HEK293 (cell line): ENCODE measurements at regions of chr16 and their contacts with region 1.

Region 1: GRCh38 chr16:11372073-11372828 is 27.0 kb downstream of the RMI2 start:
- H3K4me3 ChIP-seq: no peak overlapping the region
- H3K27ac ChIP-seq: no peak overlapping the region
- H3K4me1 ChIP-seq: peaks cover 2% of the 10 kb centered on the region; the same call in 1 of the 2 replicates
- CTCF ChIP-seq: no peak

Region 2: GRCh38 chr16:11208916-11209665 is 163.2 kb before region 1 on chr16:
- CTCF ChIA-PET with region 1: no interaction called
- POLR2A ChIA-PET with region 1: no interaction called
- H3K4me3 ChIP-seq: no peak overlapping the region
- H3K27ac ChIP-seq: no peak overlapping the region
- H3K4me1 ChIP-seq: no peaks in the 10 kb centered on the region
- CTCF ChIP-seq: no peak

Region 3: DNA sequence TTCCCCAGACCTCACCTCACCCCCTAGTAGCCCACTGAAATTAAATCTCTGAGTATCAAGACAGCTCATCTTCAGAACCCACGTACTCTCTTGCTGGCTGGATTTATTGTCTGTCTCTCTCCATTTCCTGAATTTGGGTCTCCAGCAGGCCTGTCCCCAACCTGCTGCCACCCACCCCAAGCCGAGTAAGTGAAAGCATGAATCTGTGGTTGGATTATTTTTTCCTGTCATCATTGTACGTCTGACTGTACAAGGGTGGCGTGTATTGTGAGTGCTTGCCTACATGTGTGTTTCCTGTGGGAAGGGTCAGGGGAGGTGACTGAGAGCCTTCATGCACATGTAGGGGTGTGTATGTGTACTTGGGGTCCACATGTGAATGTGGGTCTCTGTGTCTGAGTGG is 108.5 kb before region 1 on chr16:
- CTCF ChIA-PET with region 1: no interaction called
- POLR2A ChIA-PET with region 1: no interaction called
- H3K4me3 ChIP-seq: no peak overlapping the region
- H3K27ac ChIP-seq: no peak overlapping the region
- H3K4me1 ChIP-seq: no peaks in the 10 kb centered on the region
- CTCF ChIP-seq: no peak

Region 4: GRCh38 chr16:11328172-11329070 is 43.8 kb before region 1 on chr16:
- CTCF ChIA-PET with region 1: no interaction called
- POLR2A ChIA-PET with region 1: no interaction called
- H3K4me3 ChIP-seq: no peak overlapping the region
- H3K27ac ChIP-seq: no peak overlapping the region
- H3K4me1 ChIP-seq: no peaks in the 10 kb centered on the region
- CTCF ChIP-seq: no peak

Region 5: GRCh38 chr16:11356573-11357331 is 15.5 kb before region 1 on chr16:
- CTCF ChIA-PET with region 1: interaction called, 20 read pairs
- POLR2A ChIA-PET with region 1: no interaction called
- H3K4me3 ChIP-seq: no peak overlapping the region
- H3K27ac ChIP-seq: no peak overlapping the region
- H3K4me1 ChIP-seq: 0 out of 2 replicates have a peak, but pooled peaks cover 3% of the 10 kb centered on the region
- CTCF ChIP-seq: 0 out of 2 replicates have a peak, but pooled peaks have one; percentile 10

Region 6: GRCh38 chr16:11386791-11387546 is 14.7 kb after region 1 on chr16:
- CTCF ChIA-PET with region 1: interaction called, 20 read pairs
- POLR2A ChIA-PET with region 1: no interaction called
- H3K4me3 ChIP-seq: no peak overlapping the region
- H3K27ac ChIP-seq: no peak overlapping the region
- H3K4me1 ChIP-seq: no peaks in the 10 kb centered on the region
- CTCF ChIP-seq: peak; percentile 60; the same call in 1 of the 2 replicates

Region 7: GRCh38 chr16:11414815-11415775 is 42.8 kb after region 1 on chr16:
- CTCF ChIA-PET with region 1: no interaction called
- POLR2A ChIA-PET with region 1: no interaction called
- H3K4me3 ChIP-seq: no peak overlapping the region
- H3K27ac ChIP-seq: no peak overlapping the region
- H3K4me1 ChIP-seq: no peaks in the 10 kb centered on the region
- CTCF ChIP-seq: no peak